Activated naive CD4-positive, alpha-beta T cell treated with anti-CD3 and anti-CD28 coated beads, Interleukin-2, amount 10 ng/mL, durations not matched to agents 7 days and 5 days (primary cell): ENCODE measurements at regions of chr4 and their contacts with region 1.

Region 1: GRCh38 chr4:186201535-186202230 is 10.3 kb downstream of the CYP4V2 start:
- DNase-seq: peak; percentile 78
- H3K4me3 Mint-ChIP-seq: no peak overlapping the region
- H3K27ac Mint-ChIP-seq: peak overlapping the region; percentile 19
- H3K4me1 Mint-ChIP-seq: peaks cover 42% of the 10 kb centered on the region
- H3K27me3 Mint-ChIP-seq: no peaks in the 10 kb centered on the region

Region 2: GRCh38 chr4:186191200-186192065 is 10.2 kb before region 1 on chr4 and contains the start of gene CYP4V2:
- CTCF ChIA-PET with region 1: interaction called, 19 read pairs
- DNase-seq: peak; percentile 92
- H3K4me3 Mint-ChIP-seq: peak within 1 kb of the TSS; percentile 92
- H3K27ac Mint-ChIP-seq: peak within 1 kb of the TSS; percentile 96
- H3K4me1 Mint-ChIP-seq: peaks cover 36% of the 10 kb centered on the region
- H3K27me3 Mint-ChIP-seq: no peaks in the 10 kb centered on the region

Region 3: DNA sequence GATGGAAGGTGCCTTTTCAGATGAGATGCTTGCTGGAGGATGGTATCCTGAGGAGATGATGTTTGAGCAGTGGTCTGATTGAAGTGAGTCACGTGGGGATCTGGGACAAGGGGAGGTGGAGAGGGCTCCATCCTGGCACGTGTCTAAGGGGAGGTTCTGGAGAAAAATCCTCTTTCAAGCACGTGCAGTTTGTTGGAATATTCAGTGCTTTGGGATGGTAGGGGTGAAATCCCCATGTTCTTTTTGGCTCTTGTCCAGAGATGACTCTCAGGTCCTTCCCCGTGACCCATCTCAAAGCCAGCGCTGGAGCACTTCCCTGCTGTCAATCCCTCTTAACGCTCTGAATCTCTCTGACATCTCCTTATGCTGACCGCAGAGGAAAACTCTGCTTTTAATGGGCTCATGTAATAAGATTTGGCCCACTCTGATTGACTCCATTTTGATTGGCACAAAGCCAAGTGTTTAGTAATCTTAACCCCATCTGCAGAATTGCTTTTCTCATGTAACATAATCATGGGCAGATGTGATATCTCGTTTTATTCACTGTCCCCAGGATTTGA is 14.9 kb after region 1 on chr4:
- CTCF ChIA-PET with region 1: no interaction called
- DNase-seq: no peak
- H3K4me3 Mint-ChIP-seq: no peak overlapping the region
- H3K27ac Mint-ChIP-seq: no peak overlapping the region
- H3K4me1 Mint-ChIP-seq: no peaks in the 10 kb centered on the region
- H3K27me3 Mint-ChIP-seq: peaks cover 5% of the 10 kb centered on the region

Region 4: GRCh38 chr4:186458050-186458449 is 256.4 kb after region 1 on chr4:
- CTCF ChIA-PET with region 1: no interaction called
- DNase-seq: no peak
- H3K4me3 Mint-ChIP-seq: no peak overlapping the region
- H3K27ac Mint-ChIP-seq: no peak overlapping the region
- H3K4me1 Mint-ChIP-seq: no peaks in the 10 kb centered on the region
- H3K27me3 Mint-ChIP-seq: no peaks in the 10 kb centered on the region